IMR-90 (cell line): ENCODE measurements at regions of chr18 and their contacts with region 1.

Region 1: DNA sequence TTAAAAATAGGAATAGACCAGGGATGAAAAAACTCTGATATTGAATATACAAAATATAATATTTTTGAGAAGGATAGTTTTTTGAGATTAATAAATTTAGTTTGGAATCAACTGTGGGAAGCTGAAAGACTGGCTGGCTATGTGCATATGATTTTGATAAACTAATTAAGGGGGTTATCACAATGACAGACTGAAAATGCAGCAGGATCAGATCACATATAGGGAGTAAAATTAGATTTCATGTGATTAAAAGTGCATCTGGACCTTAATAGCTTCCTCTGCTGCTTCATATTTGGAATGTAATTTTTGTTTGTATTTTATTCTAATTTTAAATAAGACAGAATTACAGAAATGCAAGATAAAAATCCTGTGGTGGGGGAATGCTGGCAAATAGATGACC is 111.7 kb downstream of the CCDC102B start:
- DNase-seq: no peak
- ATAC-seq: no peak
- H3K4me3 ChIP-seq: no peak overlapping the region
- H3K27ac ChIP-seq: no peak overlapping the region
- H3K4me1 ChIP-seq: no peaks in the 10 kb centered on the region
- H3K27me3 ChIP-seq: no peaks in the 10 kb centered on the region
- CTCF ChIP-seq: no peak
- POLR2A ChIP-seq: no peak
- RAD21 ChIP-seq: no peak

Region 2: DNA sequence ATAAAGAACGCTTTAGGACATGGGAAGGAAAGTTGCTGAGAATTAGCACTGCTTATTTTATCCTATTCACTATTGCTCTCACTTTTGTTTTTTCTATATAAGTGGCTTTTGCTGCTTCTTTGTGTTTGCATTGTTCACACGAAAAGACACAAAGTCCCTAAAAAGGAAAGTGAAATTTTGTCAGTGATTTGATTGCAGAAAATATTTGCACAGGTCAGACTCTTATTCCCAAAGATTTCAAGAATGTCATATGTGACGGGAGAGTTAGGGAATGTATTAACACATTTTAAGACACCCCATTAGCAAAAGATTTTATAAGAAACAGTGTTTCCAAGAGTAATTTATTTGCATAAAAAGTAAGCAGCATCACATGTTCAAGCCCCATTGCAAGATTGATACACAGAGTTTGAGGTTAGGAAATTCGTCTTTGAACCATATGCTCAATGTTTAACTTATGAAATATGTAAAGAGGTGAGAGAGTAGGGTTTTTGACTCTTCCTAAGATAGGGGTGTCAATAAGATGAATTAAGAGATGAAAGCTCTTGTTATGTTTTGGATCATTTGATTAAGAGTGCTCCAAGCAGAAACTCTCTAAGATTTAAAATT is 54.7 kb before region 1 on chr18:
- CTCF ChIA-PET with region 1: no interaction called
- POLR2A ChIA-PET with region 1: interaction called, 25 read pairs
- dilution Hi-C with region 1: no loop called
- in situ Hi-C with region 1: no loop called
- intact Hi-C with region 1: no loop called
- DNase-seq: no peak
- ATAC-seq: no peak
- H3K4me3 ChIP-seq: no peak overlapping the region
- H3K27ac ChIP-seq: no peak overlapping the region
- H3K4me1 ChIP-seq: no peaks in the 10 kb centered on the region
- H3K27me3 ChIP-seq: no peaks in the 10 kb centered on the region
- CTCF ChIP-seq: no peak
- POLR2A ChIP-seq: no peak
- RAD21 ChIP-seq: no peak